Heart left ventricle (tissue), 16 donors: ENCODE measurements at regions of chr2 and their contacts with region 1.

Region 1: DNA sequence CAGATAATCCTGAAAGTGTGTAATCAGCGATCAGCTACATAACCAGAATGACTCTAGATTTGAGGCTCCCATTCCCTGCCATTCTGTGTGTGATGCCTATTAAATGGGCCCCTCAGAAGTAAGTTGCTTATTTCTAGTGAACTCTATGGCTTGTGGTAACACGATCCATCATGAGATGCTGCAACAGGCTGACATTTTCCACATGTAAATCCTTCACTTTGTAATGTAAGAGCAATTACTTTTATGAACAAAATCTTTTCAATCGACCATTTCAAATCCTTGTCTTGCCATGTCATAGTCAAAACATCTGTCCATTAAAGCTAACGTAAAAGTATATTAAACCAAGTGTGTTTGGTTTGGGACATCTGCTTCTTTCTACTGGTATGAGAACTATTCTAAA is 175.9 kb upstream of the ETAA1 start:
- DNase-seq: no peak
- ATAC-seq: no peak
- H3K4me3 ChIP-seq: no peak overlapping the region
- H3K27ac ChIP-seq: no peak overlapping the region
- H3K4me1 ChIP-seq: no peaks in the 10 kb centered on the region
- H3K27me3 ChIP-seq: no peaks in the 10 kb centered on the region
- CTCF ChIP-seq: no peak
- POLR2A ChIP-seq: no peak

Region 2: GRCh38 chr2:67083951-67084350 is 137.3 kb before region 1 on chr2:
- intact Hi-C with region 1: no loop called
- DNase-seq: no peak
- ATAC-seq: no peak
- H3K4me3 ChIP-seq: no peak overlapping the region
- H3K27ac ChIP-seq: peak overlapping the region in 1 of 12 donors; percentile 69
- H3K4me1 ChIP-seq: no peaks in the 10 kb centered on the region
- H3K27me3 ChIP-seq: no peaks in the 10 kb centered on the region
- CTCF ChIP-seq: no peak
- POLR2A ChIP-seq: no peak

Region 3: DNA sequence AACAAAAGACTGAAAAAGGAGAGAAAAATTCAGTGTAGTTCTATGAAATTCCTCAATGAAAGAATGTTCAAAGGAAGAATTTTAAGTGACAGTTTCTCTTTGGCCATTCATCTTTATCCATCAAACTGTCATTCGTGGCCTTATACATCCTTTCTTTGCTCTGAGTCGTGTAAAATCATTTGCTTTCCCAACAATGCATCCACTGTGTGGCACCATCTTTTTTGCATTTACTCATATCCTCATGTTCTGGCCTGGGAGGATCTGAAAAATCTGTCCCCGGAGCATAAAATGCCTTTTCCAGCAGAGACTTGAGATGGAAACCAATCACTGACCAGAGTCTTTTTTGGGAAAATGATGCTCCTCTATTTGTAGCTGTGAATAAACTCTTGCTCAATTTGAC is 64.5 kb before region 1 on chr2:
- intact Hi-C with region 1: no loop called
- DNase-seq: no peak
- ATAC-seq: no peak
- H3K4me3 ChIP-seq: no peak overlapping the region
- H3K27ac ChIP-seq: no peak overlapping the region
- H3K4me1 ChIP-seq: no peaks in the 10 kb centered on the region
- H3K27me3 ChIP-seq: no peaks in the 10 kb centered on the region
- CTCF ChIP-seq: no peak
- POLR2A ChIP-seq: no peak

Region 4: DNA sequence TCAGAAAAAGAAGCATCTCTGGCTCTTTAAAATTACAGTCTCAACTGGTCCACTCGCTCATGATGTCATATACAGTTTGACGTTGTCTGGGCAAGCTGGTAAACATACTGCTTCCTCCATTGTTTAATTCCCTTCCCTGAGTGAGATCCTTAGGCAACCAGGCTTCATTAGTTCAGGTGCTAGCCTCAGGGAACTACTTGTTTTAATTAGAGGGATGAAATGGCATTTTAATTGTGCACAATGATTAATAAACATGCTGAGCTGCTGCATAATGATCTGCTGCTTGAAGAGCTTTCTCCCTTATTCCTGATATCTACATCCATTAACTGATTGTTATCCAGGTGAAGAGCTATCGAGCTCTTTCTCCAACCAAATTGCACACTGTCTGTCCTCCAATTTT is 19.7 kb before region 1 on chr2:
- intact Hi-C with region 1: no loop called
- DNase-seq: no peak
- ATAC-seq: no peak
- H3K4me3 ChIP-seq: no peak overlapping the region
- H3K27ac ChIP-seq: no peak overlapping the region
- H3K4me1 ChIP-seq: no peaks in the 10 kb centered on the region
- H3K27me3 ChIP-seq: no peaks in the 10 kb centered on the region
- CTCF ChIP-seq: no peak
- POLR2A ChIP-seq: no peak

Region 5: DNA sequence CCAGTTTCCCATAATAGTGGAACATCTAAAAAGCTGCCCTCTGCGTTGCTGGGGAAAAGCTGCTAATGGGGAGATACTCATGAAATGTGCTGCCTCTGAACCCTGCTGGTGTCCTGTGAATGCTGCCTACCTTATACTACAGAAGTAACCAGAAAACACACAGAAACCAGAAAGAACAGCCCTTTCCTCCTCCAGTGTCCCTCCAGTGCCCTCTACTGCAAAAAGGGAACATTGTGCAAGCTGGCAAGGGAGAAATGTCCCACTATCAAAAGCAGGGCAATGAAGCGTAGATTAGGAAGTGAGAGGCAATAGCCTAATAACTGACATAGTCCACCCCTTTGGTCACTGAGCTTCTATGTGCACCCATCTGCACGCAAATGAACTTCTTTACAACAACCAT is 13.2 kb after region 1 on chr2:
- intact Hi-C with region 1: loop called in 1 of 10 experiments (anchors 1 kb)
- DNase-seq: no peak
- ATAC-seq: no peak
- H3K4me3 ChIP-seq: no peak overlapping the region
- H3K27ac ChIP-seq: no peak overlapping the region
- H3K4me1 ChIP-seq: no peaks in the 10 kb centered on the region
- H3K27me3 ChIP-seq: peaks cover 0 to 5% (median 0%) of the 10 kb centered on the region in 9 donors
- CTCF ChIP-seq: peak in 2 of 12 donors; percentile 13 to 21
- POLR2A ChIP-seq: no peak

Region 6: GRCh38 chr2:67340133-67341011 is 119.1 kb after region 1 on chr2:
- intact Hi-C with region 1: no loop called
- DNase-seq: peak in 4 of 5 donors; percentile 10 to 67 (median 42)
- ATAC-seq: peak; percentile 96 to 98 (median 98)
- H3K4me3 ChIP-seq: no peak overlapping the region
- H3K27ac ChIP-seq: no peak overlapping the region
- H3K4me1 ChIP-seq: peaks cover 0 to 15% (median 1%) of the 10 kb centered on the region in 12 donors
- H3K27me3 ChIP-seq: peaks cover 0 to 7% (median 0%) of the 10 kb centered on the region in 9 donors
- CTCF ChIP-seq: peak in 1 of 12 donors; percentile 11
- POLR2A ChIP-seq: no peak